Psoas muscle (tissue), 8 donors: ENCODE measurements at regions of chr9 and their contacts with region 1.

Region 1: DNA sequence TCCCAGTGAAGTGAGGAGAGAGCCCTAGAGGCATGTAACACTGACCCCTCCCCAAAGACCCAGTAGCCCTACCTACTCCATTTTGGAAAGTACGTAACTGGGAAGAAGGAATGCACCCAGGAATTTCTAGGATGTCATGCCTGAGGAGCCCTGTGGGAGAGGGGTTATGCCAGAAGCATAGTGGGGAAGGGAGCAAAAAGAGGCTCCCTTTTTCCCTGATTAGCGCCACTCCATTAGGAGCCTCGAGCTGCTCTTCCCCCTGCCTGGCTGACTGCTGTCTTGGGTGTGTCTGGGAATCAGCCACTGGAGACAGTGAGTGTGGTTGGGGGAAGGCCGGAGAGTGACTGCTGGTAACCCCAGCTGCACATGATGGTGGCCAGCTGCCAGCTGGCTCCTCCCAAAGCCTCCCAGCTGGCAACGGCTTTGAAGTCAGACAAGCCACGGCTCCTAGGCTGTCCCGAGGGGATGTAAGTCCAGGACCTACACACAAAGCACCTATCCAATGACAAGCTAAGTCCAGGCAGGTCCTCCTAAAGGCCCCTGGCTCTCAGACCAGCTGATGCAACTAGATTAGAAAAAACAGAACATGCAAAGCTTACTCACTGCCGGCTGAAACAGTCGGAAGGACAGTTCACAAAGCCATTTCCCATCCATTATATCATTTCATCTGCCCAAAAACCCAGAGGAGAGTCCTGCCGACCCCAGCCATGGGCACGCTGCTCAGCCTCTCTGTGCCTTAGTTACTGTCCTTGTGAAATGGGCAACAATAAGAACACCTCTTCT is 136.6 kb upstream of the ABCA1 start:
- DNase-seq: peak; percentile 91 to 97
- ATAC-seq: peak; percentile 95 to 97 (median 96)
- H3K4me3 ChIP-seq: peak overlapping the region; percentile 33
- H3K27ac ChIP-seq: peak overlapping the region; percentile 88
- H3K4me1 ChIP-seq: peaks cover 21% of the 10 kb centered on the region
- H3K27me3 ChIP-seq: no peaks in the 10 kb centered on the region
- CTCF ChIP-seq: no peak

Region 2: GRCh38 chr9:104863180-104863883 is 201.2 kb before region 1 on chr9:
- intact Hi-C with region 1: loop called (anchors 10 kb)
- DNase-seq: no peak
- ATAC-seq: peak; percentile 45 to 87 (median 75)
- H3K4me3 ChIP-seq: no peak overlapping the region
- H3K27ac ChIP-seq: peak overlapping the region; percentile 40
- H3K4me1 ChIP-seq: peaks cover 37% of the 10 kb centered on the region
- H3K27me3 ChIP-seq: no peaks in the 10 kb centered on the region
- CTCF ChIP-seq: peak; percentile 79

Region 3: GRCh38 chr9:105026451-105026850 is 38.1 kb before region 1 on chr9:
- intact Hi-C with region 1: no loop called
- DNase-seq: no peak
- ATAC-seq: no peak
- H3K4me3 ChIP-seq: no peak overlapping the region
- H3K27ac ChIP-seq: no peak overlapping the region
- H3K4me1 ChIP-seq: no peaks in the 10 kb centered on the region
- H3K27me3 ChIP-seq: no peaks in the 10 kb centered on the region
- CTCF ChIP-seq: no peak

Region 4: GRCh38 chr9:105114964-105115728 is 50.6 kb after region 1 on chr9:
- intact Hi-C with region 1: loop called in 1 of 2 experiments (anchors 5 kb)
- DNase-seq: peak; percentile 31 to 66
- ATAC-seq: peak; percentile 48 to 74 (median 60)
- H3K4me3 ChIP-seq: no peak overlapping the region
- H3K27ac ChIP-seq: peak overlapping the region; percentile 81
- H3K4me1 ChIP-seq: peaks cover 24% of the 10 kb centered on the region
- H3K27me3 ChIP-seq: no peaks in the 10 kb centered on the region
- CTCF ChIP-seq: no peak